Caco-2 (cell line): ENCODE measurements at regions of chr16 and their contacts with region 1.

Region 1: DNA sequence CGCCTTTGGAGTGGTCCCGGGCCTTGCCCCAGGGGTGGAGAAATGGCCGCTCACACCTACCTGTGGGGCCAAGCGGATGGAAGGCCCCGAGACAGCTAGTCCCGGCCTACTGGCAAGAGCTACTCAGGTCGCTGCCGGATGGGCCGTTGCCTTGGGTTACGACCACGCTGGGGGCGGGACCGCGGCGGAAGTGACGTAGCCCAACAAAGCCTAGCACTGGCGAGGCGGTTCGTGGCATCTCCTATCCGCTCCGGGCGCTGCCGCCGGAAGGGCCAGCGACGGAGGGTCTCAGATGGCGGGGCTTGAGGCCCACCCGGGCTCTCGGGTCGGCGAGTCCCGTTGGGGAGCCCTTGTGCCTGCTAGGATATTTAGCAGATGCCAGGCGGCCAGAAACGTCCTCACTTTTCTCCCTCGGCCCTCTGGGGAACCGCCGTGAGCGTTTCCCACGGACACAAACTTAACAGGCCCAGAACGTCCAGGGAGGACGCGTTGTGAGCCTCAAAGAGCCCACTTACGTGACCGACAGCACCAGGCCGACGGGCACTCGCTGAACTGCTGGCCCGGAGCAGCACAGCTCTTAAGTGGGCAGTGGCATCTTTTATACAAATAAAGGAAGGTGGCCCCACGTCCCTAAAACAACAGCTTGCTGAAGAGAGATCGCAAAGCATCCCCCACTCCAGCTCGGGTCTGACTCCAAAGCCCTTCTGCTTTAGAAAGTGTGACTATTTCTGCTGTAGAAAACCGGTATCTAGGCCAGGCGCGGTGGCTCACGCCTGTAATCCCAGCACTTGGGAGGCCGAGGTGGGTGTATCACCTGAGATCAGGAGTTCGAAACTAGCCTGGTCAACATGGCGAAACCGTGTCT is at the start of gene C16orf46:
- DNase-seq: peak; percentile 97 to 99
- H3K4me3 ChIP-seq: peak within 1 kb of the TSS; percentile 68
- H3K4me3 Mint-ChIP-seq: no peak within 1 kb of the TSS
- H3K27ac Mint-ChIP-seq: no peak within 1 kb of the TSS
- H3K4me1 ChIP-seq: peaks cover 7% of the 10 kb centered on the region; the same call in 1 of the 2 replicates
- H3K4me1 Mint-ChIP-seq: no peaks in the 10 kb centered on the region
- H3K27me3 ChIP-seq: no peaks in the 10 kb centered on the region
- H3K27me3 Mint-ChIP-seq: no peaks in the 10 kb centered on the region
- CTCF ChIP-seq: no peak
- total RNA-seq, gene C16orf46: 0.70 and 0.95 TPM in 2 replicates

Region 2: DNA sequence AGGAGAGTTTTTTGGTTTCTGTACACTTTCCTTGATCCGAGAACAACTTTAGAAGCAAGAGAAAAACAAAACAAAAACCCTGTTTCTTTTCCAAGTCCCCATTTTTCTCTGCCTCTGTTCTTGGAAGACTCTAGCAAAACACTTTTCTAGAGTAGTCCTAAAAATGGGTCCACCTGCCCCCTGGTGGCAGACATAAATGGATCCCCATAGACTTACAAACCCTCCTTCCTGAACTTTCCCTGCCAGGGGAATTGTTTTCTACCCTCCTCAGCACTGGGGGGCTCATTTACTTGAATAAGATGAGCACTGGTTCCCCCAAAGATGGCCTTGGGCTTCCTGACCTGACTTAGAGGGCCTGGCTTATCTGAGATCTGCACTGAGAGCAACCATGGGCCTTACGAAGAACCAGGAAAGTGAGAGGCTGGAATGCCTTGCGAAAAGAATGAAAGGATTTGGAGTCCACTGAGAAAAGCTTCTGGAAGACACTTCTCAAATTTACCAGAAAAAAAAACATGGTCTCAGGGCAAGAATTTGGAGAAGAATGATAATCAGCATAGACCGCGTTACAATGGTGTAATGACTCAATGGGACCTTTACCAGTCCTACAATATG is 224.9 kb before region 1 on chr16:
- CTCF ChIA-PET with region 1: no interaction called
- POLR2A ChIA-PET with region 1: no interaction called
- intact Hi-C with region 1: no loop called
- DNase-seq: peak in 1 of 2 experiments; percentile 57
- H3K4me3 ChIP-seq: no peak overlapping the region
- H3K4me3 Mint-ChIP-seq: no peak overlapping the region
- H3K27ac Mint-ChIP-seq: no peak overlapping the region
- H3K4me1 ChIP-seq: no peaks in the 10 kb centered on the region
- H3K4me1 Mint-ChIP-seq: no peaks in the 10 kb centered on the region
- H3K27me3 ChIP-seq: no peaks in the 10 kb centered on the region
- H3K27me3 Mint-ChIP-seq: no peaks in the 10 kb centered on the region
- CTCF ChIP-seq: peak; percentile 57 to 77

Region 3: DNA sequence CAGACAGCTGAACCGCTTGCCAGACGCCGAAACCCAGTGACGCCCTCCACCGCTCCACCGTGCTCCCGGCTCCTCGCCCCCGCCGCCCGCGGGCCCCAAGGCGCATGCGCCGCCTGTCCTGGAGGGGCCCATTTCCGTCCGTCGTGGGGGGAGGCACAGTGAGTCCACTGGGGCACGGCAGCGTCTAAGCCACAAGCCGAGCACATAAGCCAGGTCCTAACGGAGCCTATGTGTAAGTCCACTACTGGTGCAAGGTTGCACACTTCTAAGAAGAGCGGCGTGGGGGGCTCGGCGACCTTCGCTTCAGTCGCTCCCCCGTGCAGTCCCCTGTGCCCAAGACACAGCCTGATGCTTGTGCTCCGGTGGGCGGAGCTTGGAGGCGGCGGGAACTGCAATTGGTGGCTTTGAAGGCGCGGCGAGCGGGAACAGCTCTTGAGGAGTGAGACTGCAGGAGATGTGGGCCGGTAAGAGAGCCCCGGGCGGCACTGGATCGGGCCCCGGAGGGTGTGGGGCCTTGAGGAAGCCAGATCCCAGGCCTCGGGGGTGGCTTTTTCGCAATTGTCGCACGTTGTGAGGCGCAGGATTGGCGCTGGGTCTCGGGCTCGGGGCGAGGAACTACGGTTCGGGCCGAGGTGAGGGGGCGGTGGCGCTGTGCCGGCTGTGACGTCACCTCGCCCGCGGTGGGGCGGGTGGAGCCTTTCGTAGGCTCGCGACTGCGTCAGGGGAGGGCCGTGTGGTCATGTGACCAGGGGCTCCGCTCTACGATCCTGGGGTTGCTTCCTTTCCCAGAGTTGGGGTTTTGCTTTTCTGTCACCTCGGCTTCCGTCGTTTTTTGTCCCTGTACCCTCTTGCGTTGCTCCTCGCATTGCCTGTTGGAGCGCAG is 70.3 kb before region 1 on chr16 and contains the starts of genes CENPN and CMC2:
- CTCF ChIA-PET with region 1: interaction called, 3 read pairs
- POLR2A ChIA-PET with region 1: interaction called, 3 read pairs
- intact Hi-C with region 1: loop called (anchors 1 kb)
- DNase-seq: peak; percentile 99
- H3K4me3 ChIP-seq: peak within 1 kb of the TSS; percentile 85
- H3K4me3 Mint-ChIP-seq: peak within 1 kb of the TSS; percentile 94
- H3K27ac Mint-ChIP-seq: peak within 1 kb of the TSS; percentile 100
- H3K4me1 ChIP-seq: peaks cover 13% of the 10 kb centered on the region; the same call in 1 of the 2 replicates
- H3K4me1 Mint-ChIP-seq: peaks cover 7% of the 10 kb centered on the region
- H3K27me3 ChIP-seq: no peaks in the 10 kb centered on the region
- H3K27me3 Mint-ChIP-seq: no peaks in the 10 kb centered on the region
- CTCF ChIP-seq: no peak
- total RNA-seq, gene CENPN: 100 and 105 TPM in 2 replicates
- total RNA-seq, gene CMC2: 94.1 and 101 TPM in 2 replicates

Region 4: GRCh38 chr16:81140930-81141780 is 63.8 kb after region 1 on chr16:
- CTCF ChIA-PET with region 1: no interaction called
- POLR2A ChIA-PET with region 1: no interaction called
- intact Hi-C with region 1: loop called (anchors 5 kb)
- DNase-seq: peak; percentile 47 to 56
- H3K4me3 ChIP-seq: no peak overlapping the region
- H3K4me3 Mint-ChIP-seq: no peak overlapping the region
- H3K27ac Mint-ChIP-seq: no peak overlapping the region
- H3K4me1 ChIP-seq: peaks cover 39% of the 10 kb centered on the region
- H3K4me1 Mint-ChIP-seq: peaks cover 23% of the 10 kb centered on the region
- H3K27me3 ChIP-seq: no peaks in the 10 kb centered on the region
- H3K27me3 Mint-ChIP-seq: no peaks in the 10 kb centered on the region
- CTCF ChIP-seq: no peak

Region 5: DNA sequence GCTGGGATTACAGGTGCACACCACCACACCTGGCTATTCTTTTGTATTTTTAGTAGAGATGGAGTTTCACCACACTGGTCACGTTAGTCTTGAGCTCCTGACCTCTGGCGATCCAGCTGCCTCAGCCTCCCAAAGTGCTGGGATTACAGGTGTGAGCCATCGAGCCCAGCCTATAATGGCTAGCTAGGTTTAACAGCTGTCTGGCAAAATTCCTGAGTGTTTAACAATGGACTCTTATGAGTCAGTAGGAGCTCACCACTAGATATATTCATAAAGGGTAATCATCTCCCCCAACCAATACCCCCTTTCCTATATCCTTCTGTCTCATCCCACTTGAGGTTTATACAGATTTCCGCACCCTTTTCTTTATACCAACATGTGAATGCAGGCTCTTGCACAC is 1458.0 kb after region 1 on chr16:
- CTCF ChIA-PET with region 1: interaction called, 11 read pairs
- POLR2A ChIA-PET with region 1: no interaction called
- intact Hi-C with region 1: no loop called
- DNase-seq: no peak
- H3K4me3 ChIP-seq: no peak overlapping the region
- H3K4me3 Mint-ChIP-seq: no peak overlapping the region
- H3K27ac Mint-ChIP-seq: no peak overlapping the region
- H3K4me1 ChIP-seq: no peaks in the 10 kb centered on the region
- H3K4me1 Mint-ChIP-seq: no peaks in the 10 kb centered on the region
- H3K27me3 ChIP-seq: no peaks in the 10 kb centered on the region; the same call in 1 of the 2 replicates
- H3K27me3 Mint-ChIP-seq: peaks cover 11% of the 10 kb centered on the region
- CTCF ChIP-seq: no peak